Breast epithelium (tissue), 4 donors: ENCODE measurements at regions of chr1 and their contacts with region 1.

Region 1: DNA sequence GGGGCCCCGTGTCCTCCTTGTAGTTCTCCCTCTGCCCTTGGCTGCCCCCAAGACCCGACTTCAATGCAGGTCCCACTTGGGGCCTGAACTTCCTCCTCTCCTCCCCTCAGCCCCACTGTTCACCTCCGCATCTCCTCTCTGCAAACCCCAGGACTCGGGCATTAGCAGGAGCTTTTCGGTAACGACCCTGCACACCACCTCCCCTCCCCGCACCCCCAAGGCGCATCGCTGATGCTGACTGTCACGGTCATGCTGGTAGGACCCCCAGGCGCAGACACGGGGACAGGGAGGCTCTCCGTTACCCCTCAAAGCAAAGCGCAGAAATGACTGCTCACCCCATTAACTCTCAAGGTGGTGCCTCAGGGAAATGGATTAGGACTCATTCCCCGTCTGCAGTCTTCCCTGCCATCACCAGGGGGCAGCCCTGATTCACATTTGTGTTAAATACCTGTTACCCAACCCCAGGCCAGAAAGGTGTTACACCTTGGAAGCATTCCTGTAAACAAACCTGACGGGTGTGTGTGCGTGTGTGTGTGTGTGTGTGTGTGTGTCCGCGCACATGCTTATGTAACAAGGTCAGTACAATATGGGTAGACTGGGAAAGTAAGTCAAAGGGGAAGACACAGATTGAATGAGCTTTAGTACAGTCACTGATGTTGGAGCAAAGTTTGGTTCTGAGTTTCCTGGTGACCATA is 6.4 kb upstream of the GUCA2B start:
- DNase-seq: peak; percentile 82 to 87
- H3K4me3 ChIP-seq: peak overlapping the region in 1 of 3 donors; percentile 7
- H3K27ac ChIP-seq: no peak overlapping the region
- H3K4me1 ChIP-seq: peaks cover 0 to 7% of the 10 kb centered on the region in 2 donors
- H3K27me3 ChIP-seq: peaks cover 0 to 3% of the 10 kb centered on the region in 2 donors
- CTCF ChIP-seq: peak; percentile 88 to 99 (median 94)
- POLR2A ChIP-seq: no peak

Region 2: DNA sequence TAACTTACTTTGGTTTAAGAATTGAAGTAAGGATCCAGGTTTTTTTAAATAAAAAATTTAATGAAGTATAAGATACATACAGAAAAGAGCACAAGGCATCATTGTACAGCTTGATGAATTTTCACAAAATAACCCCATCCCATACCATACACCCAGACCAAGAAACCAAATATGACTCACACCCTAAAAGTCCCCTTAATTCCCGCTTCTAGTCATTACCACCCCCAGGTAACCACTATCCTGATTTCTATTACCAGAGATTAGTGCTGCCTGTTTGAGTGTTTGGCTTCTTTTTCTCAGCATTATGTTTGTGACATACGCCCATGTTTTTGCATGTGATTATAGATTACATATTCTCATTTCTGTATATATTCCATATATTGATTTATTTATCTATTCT is 129.5 kb before region 1 on chr1:
- intact Hi-C with region 1: loop called (anchors 5 kb)
- DNase-seq: no peak
- H3K4me3 ChIP-seq: no peak overlapping the region
- H3K27ac ChIP-seq: no peak overlapping the region
- H3K4me1 ChIP-seq: no peaks in the 10 kb centered on the region
- H3K27me3 ChIP-seq: no peaks in the 10 kb centered on the region
- CTCF ChIP-seq: no peak
- POLR2A ChIP-seq: no peak

Region 3: DNA sequence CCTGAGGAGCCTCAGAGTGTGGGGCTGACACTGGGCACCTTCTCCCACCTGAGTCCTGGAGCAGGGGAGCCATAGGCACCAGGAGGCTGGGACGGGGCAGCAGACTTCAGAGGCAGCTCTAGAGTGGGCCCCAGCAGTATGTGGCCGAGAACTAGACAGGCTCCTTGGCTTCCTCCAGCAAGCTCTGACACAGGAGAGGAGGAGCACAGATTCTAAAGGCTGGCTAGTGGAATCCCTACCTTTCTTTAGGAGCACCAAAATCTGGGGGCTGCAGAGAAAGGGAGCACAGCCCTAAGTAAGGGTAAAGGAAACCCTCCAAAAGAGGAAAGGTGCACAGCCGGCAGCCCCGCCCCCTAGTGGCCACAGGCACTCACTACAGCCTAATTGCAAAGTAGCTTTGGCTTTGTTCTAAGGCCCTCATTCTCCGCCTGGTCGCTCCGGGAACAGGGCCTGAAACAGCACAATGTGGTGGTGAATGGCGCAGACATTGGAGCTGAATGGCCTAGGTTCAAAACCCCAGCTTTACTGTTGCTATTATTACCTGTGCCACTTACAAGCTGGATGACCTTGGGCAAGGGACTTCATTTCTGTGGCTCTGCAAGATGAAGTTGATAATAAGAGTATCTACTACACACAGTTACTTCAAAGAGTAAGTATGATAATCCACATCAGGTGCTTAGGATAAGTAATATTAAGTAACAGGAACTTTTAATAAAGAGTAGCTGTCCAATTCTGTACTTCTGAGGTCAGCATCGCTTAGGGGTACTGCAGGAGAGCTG is 26.6 kb after region 1 on chr1:
- intact Hi-C with region 1: loop called (anchors 1 kb)
- DNase-seq: peak in 1 of 2 donors; percentile 74
- H3K4me3 ChIP-seq: peak overlapping the region in 1 of 3 donors; percentile 15
- H3K27ac ChIP-seq: peak overlapping the region; percentile 81 to 86
- H3K4me1 ChIP-seq: peaks cover 9 to 17% of the 10 kb centered on the region in 2 donors
- H3K27me3 ChIP-seq: no peaks in the 10 kb centered on the region
- CTCF ChIP-seq: peak; percentile 85 to 95 (median 87)
- POLR2A ChIP-seq: no peak